ENCODE measurements at regions of chr7 and their contacts with region 1.

Region 1: GRCh38 chr7:12524794-12525386 is 45.6 kb upstream of the SCIN start:
- DNase-seq: peak; percentile 52 to 71 (median 67)
- H3K4me3 ChIP-seq: no peak overlapping the region
- H3K27ac ChIP-seq: no peak overlapping the region
- H3K4me1 ChIP-seq: no peaks in the 10 kb centered on the region
- H3K27me3 ChIP-seq: no peaks in the 10 kb centered on the region

Region 2: GRCh38 chr7:12444785-12445184 is 80.1 kb before region 1 on chr7:
- CTCF ChIA-PET with region 1: no interaction called
- POLR2A ChIA-PET with region 1: no interaction called
- DNase-seq: no peak
- H3K4me3 ChIP-seq: no peak overlapping the region
- H3K27ac ChIP-seq: no peak overlapping the region
- H3K4me1 ChIP-seq: no peaks in the 10 kb centered on the region
- H3K27me3 ChIP-seq: no peaks in the 10 kb centered on the region

Region 3: DNA sequence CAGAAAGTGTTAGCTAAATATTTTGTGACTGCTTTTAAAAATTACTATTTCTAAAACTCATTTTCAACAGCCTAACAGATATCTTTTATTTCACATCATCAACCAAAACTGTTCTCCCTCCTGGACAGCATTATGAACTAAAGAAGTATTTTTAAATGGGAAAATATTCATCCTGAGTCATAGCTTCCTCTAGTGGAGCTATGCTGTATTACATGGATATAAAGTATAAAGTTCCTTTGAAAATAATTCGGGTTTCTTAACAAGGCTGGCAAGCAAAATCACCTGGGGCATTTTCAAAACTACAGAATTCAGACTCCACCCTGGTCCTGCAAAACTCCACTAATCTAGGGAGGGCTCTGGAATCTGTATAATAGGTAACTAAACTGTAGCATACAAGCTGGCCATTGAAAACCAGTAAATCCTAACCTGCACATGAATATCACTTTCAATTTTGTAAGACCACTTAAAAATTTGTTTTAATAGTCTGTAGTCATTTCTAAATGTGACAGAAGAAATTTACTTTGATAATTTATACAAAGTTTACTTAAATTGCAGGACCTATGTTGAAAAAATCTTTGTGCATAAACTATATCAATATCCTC is 99.1 kb after region 1 on chr7:
- CTCF ChIA-PET with region 1: interaction called, 26 read pairs
- POLR2A ChIA-PET with region 1: no interaction called
- DNase-seq: peak in 1 of 3 donors; percentile 7
- H3K4me3 ChIP-seq: no peak overlapping the region
- H3K27ac ChIP-seq: no peak overlapping the region
- H3K4me1 ChIP-seq: peaks cover 0 to 7% (median 0%) of the 10 kb centered on the region in 4 experiments
- H3K27me3 ChIP-seq: no peaks in the 10 kb centered on the region

Region 4: GRCh38 chr7:12638851-12639467 is 114.1 kb after region 1 on chr7:
- CTCF ChIA-PET with region 1: interaction called, 16 read pairs
- POLR2A ChIA-PET with region 1: no interaction called
- DNase-seq: peak; percentile 54 to 75 (median 72)
- H3K4me3 ChIP-seq: peak overlapping the region in 2 of 7 experiments; percentile 71 to 72
- H3K27ac ChIP-seq: no peak overlapping the region
- H3K4me1 ChIP-seq: peaks cover 7 to 25% (median 9%) of the 10 kb centered on the region in 4 experiments
- H3K27me3 ChIP-seq: no peaks in the 10 kb centered on the region

Region 5: DNA sequence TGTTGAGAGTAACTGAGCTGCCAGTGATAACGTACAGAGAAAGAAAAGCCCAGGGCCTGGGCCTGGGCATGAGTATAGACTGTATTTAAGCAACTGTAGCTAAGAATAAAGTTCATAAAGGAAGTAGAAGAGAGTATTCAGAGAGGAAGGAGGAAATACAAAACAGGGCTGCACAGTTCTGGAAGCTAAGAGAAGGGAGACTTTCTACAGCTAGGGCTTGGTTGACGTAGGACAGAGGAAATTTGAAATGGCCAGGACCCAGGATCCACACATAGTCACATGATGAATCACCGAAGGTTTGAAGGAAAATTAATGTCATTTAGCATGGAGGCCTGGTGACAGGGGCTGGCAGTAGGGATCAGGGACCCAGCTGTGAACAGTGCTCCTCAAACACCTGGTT is 229.3 kb after region 1 on chr7:
- CTCF ChIA-PET with region 1: no interaction called
- POLR2A ChIA-PET with region 1: no interaction called
- DNase-seq: no peak
- H3K4me3 ChIP-seq: no peak overlapping the region
- H3K27ac ChIP-seq: no peak overlapping the region
- H3K4me1 ChIP-seq: peaks cover 0 to 4% (median 0%) of the 10 kb centered on the region in 4 experiments
- H3K27me3 ChIP-seq: no peaks in the 10 kb centered on the region

Region 6: DNA sequence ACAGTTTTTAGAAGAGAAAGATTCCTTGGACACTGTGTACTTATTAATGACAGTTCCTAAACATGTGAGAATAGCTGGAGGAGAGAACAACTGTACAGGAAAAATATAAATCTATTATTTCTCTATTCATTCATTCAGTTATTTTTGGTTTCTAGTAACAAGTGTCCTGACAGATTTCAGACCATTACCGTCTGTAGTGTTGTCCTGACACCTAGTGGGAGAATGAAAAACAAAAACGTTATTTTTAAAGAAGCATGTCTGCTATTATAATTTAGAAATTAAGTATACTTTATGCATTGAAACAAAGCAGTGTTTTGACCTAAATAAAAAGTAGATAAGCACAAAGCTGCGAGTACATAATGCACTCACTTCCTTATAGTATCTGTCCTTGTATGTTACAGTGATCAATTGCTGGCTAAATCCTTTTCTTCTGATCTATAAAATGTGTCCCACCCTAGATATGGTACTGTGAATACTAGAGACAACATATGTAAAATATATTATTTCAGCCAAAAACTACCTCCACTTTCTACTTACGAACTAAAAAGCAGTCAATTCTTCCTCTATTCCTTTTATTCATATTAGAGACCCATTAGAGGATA is 738.1 kb after region 1 on chr7:
- CTCF ChIA-PET with region 1: interaction called, 38 read pairs
- POLR2A ChIA-PET with region 1: no interaction called
- DNase-seq: peak; percentile 45 to 76 (median 62)
- H3K4me3 ChIP-seq: no peak overlapping the region
- H3K27ac ChIP-seq: no peak overlapping the region
- H3K4me1 ChIP-seq: no peaks in the 10 kb centered on the region
- H3K27me3 ChIP-seq: no peaks in the 10 kb centered on the region

Measured in common myeloid progenitor, CD34-positive (primary cell).